OCI-LY7 (cell line): ENCODE measurements at regions of chr20 and their contacts with region 1.

Region 1: DNA sequence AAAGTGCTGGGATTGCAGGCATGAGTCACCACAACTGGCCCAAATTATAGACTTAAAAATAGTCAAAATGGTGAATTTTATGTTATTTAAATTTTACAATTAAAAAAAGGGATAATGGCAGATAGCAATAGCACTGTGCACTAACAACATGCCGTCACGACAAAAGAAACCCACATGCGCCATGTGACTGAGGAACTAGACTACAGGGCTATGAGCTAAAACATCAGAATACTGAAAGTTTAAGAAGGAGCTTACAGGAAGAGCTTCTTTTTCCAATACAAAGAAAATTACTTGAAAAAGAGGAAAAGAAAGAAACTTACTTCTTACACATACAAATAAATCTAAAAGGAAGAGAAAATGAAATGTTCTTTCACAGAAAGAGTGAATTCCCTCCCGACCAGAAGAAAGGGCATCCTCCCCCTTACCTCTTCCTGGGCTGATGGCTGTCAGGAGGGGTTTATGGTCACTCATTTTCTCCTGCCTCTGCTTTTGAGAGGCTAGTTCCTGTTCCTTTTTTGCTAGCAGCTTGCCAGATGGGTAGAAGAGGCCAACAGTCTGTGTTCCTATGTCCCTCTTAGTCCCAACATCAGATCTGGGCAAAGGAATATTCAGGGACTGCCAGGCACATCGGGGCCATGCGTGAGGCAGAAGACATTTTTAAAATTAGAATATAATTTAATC is 54.5 kb downstream of the DZANK1 start:
- DNase-seq: peak; percentile 53
- H3K4me3 ChIP-seq: peak overlapping the region; percentile 67
- H3K27ac ChIP-seq: peak overlapping the region; percentile 55
- H3K4me1 ChIP-seq: peaks cover 35% of the 10 kb centered on the region
- CTCF ChIP-seq: no peak

Region 2: GRCh38 chr20:18263723-18264122 is 148.6 kb before region 1 on chr20:
- CTCF ChIA-PET with region 1: no interaction called
- POLR2A ChIA-PET with region 1: no interaction called
- intact Hi-C with region 1: no loop called
- DNase-seq: no peak
- H3K4me3 ChIP-seq: no peak overlapping the region
- H3K27ac ChIP-seq: no peak overlapping the region
- H3K4me1 ChIP-seq: no peaks in the 10 kb centered on the region
- CTCF ChIP-seq: no peak

Region 3: DNA sequence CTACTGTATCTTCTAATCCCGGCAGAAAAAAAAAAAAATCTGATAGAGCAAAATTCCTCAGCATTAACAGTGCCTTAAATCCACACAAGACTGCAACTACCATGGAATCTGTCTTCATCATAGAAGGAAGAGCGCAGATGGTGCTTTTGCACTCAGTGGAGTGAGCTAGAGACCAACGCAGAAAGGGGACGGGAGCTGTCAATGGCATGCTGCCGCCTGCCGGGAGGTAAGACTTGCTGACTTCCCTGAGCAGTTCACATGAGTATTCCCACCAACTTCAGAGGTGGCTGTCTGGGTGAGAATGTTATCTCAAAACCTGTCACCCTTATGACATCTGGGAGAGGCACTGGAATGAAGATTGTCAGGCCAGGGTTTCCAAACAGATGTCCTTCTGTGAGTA is 18.8 kb after region 1 on chr20:
- CTCF ChIA-PET with region 1: no interaction called
- POLR2A ChIA-PET with region 1: no interaction called
- intact Hi-C with region 1: no loop called
- DNase-seq: no peak
- H3K4me3 ChIP-seq: no peak overlapping the region
- H3K27ac ChIP-seq: no peak overlapping the region
- H3K4me1 ChIP-seq: no peaks in the 10 kb centered on the region
- CTCF ChIP-seq: no peak

Region 4: GRCh38 chr20:18466894-18467730 is 54.8 kb after region 1 on chr20 and contains the starts of genes DZANK1 and POLR3F:
- CTCF ChIA-PET with region 1: no interaction called
- POLR2A ChIA-PET with region 1: interaction called, 3 read pairs
- intact Hi-C with region 1: loop called (anchors 1 kb)
- DNase-seq: peak; percentile 93
- H3K4me3 ChIP-seq: peak within 1 kb of the TSS; percentile 86
- H3K27ac ChIP-seq: peak within 1 kb of the TSS; percentile 3
- H3K4me1 ChIP-seq: peaks cover 17% of the 10 kb centered on the region
- CTCF ChIP-seq: no peak
- total RNA-seq, gene DZANK1: 7.9 and 9.1 TPM in 2 replicates
- total RNA-seq, gene POLR3F: 12.0 and 14.9 TPM in 2 replicates

Region 5: GRCh38 chr20:18507218-18508021 is 95.1 kb after region 1 on chr20 and contains the start of gene SEC23B:
- CTCF ChIA-PET with region 1: no interaction called
- POLR2A ChIA-PET with region 1: interaction called, 6 read pairs
- intact Hi-C with region 1: loop called (anchors 2 kb)
- DNase-seq: peak; percentile 97
- H3K4me3 ChIP-seq: peak within 1 kb of the TSS; percentile 91
- H3K27ac ChIP-seq: peak within 1 kb of the TSS; percentile 90
- H3K4me1 ChIP-seq: peaks cover 15% of the 10 kb centered on the region
- CTCF ChIP-seq: no peak
- total RNA-seq, gene SEC23B: 40.3 and 42.6 TPM in 2 replicates

Region 6: DNA sequence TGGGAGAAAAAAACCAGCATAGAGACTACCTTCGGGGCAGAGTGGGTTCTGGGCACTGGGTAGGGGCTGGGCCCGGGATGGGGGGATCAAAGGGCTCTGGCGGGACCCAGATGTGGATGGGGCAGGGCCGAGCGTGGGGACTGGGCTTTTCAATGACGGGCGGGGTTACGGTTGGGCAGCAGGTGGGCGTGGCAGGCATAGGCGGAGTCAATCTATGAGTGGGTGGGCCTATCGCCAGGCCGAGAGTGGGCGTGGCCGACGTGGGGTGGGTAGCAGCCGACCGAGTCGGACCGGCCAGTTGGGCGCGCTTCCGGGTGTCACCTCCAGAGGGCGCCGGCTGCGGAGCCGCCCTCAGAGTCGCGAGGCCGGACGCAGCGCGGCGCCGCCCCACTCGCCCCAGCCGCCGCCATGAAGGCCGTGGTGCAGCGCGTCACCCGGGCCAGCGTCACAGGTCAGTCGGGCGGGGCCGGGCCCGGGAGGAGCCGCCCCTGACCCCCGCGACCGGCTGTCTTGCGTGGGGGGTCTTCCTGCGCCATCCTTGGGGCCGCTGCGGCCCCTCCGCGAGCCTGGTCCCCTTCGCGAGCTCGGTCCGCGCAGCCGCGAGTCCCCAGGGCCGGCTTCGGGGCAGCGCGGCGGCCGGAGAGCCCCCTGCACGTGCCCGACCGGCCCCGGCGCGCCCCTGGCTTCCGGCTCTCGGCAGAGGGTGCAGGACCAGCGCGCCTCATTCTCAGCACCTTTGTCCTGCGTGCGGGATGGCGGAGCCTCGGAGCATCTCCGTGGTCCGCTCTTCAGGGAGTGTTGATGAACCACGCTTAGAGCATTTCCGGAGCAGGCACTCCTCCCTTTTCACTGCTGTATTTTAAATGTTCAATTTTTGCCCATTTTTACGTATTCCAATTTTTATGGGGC is 175.6 kb after region 1 on chr20 and contains the start of gene DTD1:
- CTCF ChIA-PET with region 1: no interaction called
- POLR2A ChIA-PET with region 1: interaction called, 3 read pairs
- intact Hi-C with region 1: loop called (anchors 5 kb)
- DNase-seq: peak; percentile 87
- H3K4me3 ChIP-seq: peak within 1 kb of the TSS; percentile 81
- H3K27ac ChIP-seq: peak within 1 kb of the TSS; percentile 10
- H3K4me1 ChIP-seq: peaks cover 15% of the 10 kb centered on the region
- CTCF ChIP-seq: peak; percentile 76
- total RNA-seq, gene DTD1: 27.6 and 35.3 TPM in 2 replicates

Region 7: GRCh38 chr20:18632196-18633009 is 220.0 kb after region 1 on chr20:
- CTCF ChIA-PET with region 1: no interaction called
- POLR2A ChIA-PET with region 1: no interaction called
- intact Hi-C with region 1: loop called (anchors 1 kb)
- DNase-seq: peak; percentile 71
- H3K4me3 ChIP-seq: no peak overlapping the region
- H3K27ac ChIP-seq: no peak overlapping the region
- H3K4me1 ChIP-seq: no peaks in the 10 kb centered on the region
- CTCF ChIP-seq: peak; percentile 98

Region 8: DNA sequence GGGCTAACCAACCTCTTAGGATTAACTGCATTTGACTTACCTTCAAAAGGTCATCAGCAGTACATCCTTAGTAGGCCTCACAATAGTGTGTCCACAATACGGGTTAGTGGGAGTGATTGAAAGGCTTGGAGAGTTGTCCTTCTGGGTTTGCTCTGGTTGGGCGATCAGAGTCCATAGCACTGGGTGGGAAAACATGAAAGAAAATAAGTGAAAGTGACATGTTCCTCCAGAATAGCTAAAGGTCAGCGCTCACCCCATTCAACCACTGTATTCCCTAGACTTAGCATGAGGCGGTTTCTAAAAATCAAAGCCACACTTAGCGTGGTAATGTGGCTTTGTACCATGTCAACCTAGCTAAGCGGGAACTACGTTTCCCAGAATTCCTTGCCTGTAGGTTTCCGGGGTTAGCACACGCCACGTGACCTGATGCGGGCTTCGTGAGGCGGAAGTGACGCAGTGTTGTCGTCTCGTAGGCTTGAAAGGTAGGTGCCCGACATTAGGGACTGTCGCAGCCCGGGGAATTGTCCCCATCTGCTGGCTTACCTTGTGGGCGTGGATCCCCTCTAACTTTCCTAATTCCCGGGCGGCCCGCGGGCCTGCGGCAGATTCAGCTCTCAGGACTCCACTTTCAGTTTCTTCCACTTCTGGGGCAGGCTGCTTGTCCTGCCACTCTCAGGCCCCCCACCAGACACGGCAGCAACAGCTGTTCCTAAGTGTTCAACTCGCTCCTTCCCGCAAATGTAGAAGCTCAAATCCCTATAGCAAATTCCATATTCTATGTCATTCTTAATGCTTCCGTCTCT is 381.5 kb after region 1 on chr20:
- CTCF ChIA-PET with region 1: no interaction called
- POLR2A ChIA-PET with region 1: no interaction called
- intact Hi-C with region 1: loop called (anchors 1 kb)
- DNase-seq: peak; percentile 94
- H3K4me3 ChIP-seq: peak overlapping the region; percentile 77
- H3K27ac ChIP-seq: no peak overlapping the region
- H3K4me1 ChIP-seq: peaks cover 5% of the 10 kb centered on the region
- CTCF ChIP-seq: peak; percentile 51

Region 9: DNA sequence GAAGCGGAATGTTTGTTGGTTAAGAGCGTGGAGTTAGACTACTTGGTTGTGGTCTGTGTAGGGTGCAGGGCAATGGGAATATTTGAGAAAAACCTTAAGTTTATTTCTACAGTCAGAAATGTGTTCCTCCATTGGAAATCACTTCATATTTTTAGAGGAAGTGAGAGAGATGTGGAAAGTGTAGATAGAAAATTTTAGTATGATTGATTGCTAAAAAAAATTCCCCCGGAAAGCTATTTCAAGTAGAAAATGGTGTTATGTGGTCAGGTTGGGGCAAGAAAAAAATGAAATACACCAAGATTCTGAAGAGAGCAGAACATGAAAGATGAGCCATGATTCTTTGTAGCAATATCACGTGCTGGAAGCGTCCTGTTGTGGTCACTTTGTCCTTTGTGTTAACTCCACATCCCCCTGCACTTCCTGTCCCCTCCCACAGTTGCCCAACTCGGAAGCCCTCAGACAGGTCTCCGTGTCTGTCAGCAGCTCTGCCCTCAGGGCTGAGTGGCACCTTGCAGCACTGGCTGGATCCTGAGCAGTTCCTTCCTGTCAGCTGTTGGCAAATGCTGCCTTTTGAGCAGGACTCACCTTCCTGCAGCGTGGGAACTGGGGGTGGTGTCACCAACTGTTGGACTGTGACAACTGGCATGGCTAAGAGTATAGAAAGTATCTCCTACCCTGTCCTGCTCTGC is 662.6 kb after region 1 on chr20:
- CTCF ChIA-PET with region 1: no interaction called
- POLR2A ChIA-PET with region 1: no interaction called
- intact Hi-C with region 1: loop called (anchors 5 kb)
- DNase-seq: no peak
- H3K4me3 ChIP-seq: no peak overlapping the region
- H3K27ac ChIP-seq: no peak overlapping the region
- H3K4me1 ChIP-seq: peaks cover 30% of the 10 kb centered on the region
- CTCF ChIP-seq: no peak